ENCODE measurements at regions of chr6 and their contacts with region 1.

Region 1: DNA sequence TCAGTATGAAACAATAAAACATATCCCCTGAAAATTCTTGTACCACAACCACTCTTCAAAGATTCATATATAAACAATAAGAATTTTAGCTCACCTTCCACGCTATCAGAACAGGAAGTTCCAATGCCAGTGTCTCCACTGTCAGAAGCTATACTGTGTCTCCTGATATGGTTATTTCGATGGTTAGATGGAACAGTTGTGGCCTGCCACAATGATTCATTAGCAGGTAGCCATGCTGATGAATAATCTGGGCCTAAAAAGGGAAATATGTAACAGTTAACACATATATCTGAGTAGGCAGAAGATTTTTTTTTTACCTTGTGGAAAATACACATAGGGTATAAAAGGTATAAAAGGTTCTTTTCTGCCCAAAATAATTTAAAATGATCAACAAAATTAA is 19.0 kb downstream of the CEP85L start:
- DNase-seq: no peak
- ATAC-seq: no peak
- H3K4me3 ChIP-seq: no peak overlapping the region
- H3K27ac ChIP-seq: no peak overlapping the region
- H3K4me1 ChIP-seq: no peaks in the 10 kb centered on the region
- H3K27me3 ChIP-seq: no peaks in the 10 kb centered on the region
- CTCF ChIP-seq: no peak

Region 2: DNA sequence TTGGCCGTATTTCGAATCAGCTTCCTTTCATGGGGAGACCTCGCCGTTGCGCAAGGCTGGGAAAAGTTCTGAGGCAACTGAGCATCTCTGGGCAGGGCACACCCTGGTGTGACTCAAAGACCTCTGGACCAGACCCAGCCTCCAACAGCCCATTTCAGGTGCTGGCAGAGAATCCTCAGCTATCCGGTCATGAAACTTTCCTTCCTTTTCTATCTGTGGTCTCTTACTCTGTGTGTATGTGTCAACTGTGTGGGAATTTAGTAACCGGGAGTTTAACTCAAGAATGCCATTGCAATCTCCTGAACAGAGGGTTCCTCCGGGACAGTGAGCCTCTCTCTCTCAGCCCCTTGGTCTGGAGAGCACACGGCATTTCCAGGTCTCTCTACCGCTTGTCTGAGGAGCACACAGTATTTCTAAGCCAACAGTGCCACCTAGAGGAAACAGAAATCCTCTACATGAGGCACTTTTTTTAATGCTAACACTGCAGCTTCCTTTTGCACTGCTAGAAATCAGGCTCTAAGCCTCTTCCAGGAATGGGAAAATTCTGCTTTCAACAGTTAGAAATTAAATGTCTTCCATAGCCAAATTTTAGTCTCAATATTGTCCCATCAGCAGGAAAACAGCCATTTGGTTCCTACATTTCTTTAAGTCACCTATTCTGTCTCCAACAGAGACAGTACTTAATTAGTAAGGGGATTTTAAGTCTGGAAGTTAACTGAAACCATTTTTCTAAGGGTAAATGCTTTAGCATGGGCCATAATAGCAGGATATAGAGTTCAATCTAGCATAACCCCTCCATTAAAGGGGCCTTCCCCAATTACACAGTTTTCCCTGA is 51.6 kb before region 1 on chr6:
- CTCF ChIA-PET with region 1: no interaction called
- POLR2A ChIA-PET with region 1: no interaction called
- intact Hi-C with region 1: no loop called
- DNase-seq: peak; percentile 56
- ATAC-seq: peak; percentile 67
- H3K4me3 ChIP-seq: no peak overlapping the region
- H3K27ac ChIP-seq: no peak overlapping the region
- H3K4me1 ChIP-seq: no peaks in the 10 kb centered on the region
- H3K27me3 ChIP-seq: no peaks in the 10 kb centered on the region
- CTCF ChIP-seq: peak; percentile 68

Region 3: GRCh38 chr6:118667988-118668387 is 35.6 kb after region 1 on chr6:
- CTCF ChIA-PET with region 1: no interaction called
- POLR2A ChIA-PET with region 1: no interaction called
- intact Hi-C with region 1: loop called (anchors 1 kb)
- DNase-seq: no peak
- ATAC-seq: no peak
- H3K4me3 ChIP-seq: no peak overlapping the region
- H3K27ac ChIP-seq: no peak overlapping the region
- H3K4me1 ChIP-seq: peaks cover 13% of the 10 kb centered on the region; the same call in 1 of the 2 replicates
- H3K27me3 ChIP-seq: no peaks in the 10 kb centered on the region
- CTCF ChIP-seq: no peak

Measured in PC-3 (cell line).